GM12878 (cell line): ENCODE measurements at regions of chr15 and their contacts with region 1.

Region 1: GRCh38 chr15:91706322-91707032 is 147.0 kb upstream of the SLCO3A1 start:
- DNase-seq: peak; percentile 3
- ATAC-seq: peak; percentile 83
- H3K4me3 ChIP-seq: no peak overlapping the region
- H3K27ac ChIP-seq: no peak overlapping the region
- H3K4me1 ChIP-seq: no peaks in the 10 kb centered on the region
- H3K27me3 ChIP-seq: no peaks in the 10 kb centered on the region; a peak in 1 of 4 replicates
- CTCF ChIP-seq: peak; percentile 64 to 90 (median 70)
- EP300 ChIP-seq: no peak
- POLR2A ChIP-seq: no peak
- RAD21 ChIP-seq: peak; percentile 45

Region 2: GRCh38 chr15:91302588-91303439 is 403.7 kb before region 1 on chr15:
- CTCF ChIA-PET with region 1: interaction called, 5 read pairs
- POLR2A ChIA-PET with region 1: no interaction called
- RAD21 ChIA-PET with region 1: interaction called, 3 read pairs
- SMC1A ChIA-PET with region 1: interaction called, 3 read pairs
- in situ Hi-C with region 1: no loop called
- intact Hi-C with region 1: loop called (anchors 10 kb)
- DNase-seq: peak; percentile 17
- ATAC-seq: peak; percentile 78
- H3K4me3 ChIP-seq: no peak overlapping the region
- H3K27ac ChIP-seq: no peak overlapping the region
- H3K4me1 ChIP-seq: no peaks in the 10 kb centered on the region
- H3K27me3 ChIP-seq: peaks cover 0 to 3% of the 10 kb centered on the region in 2 experiments; a peak in 1 of 4 replicates
- CTCF ChIP-seq: peak; percentile 67 to 78 (median 70)
- EP300 ChIP-seq: no peak
- POLR2A ChIP-seq: no peak
- RAD21 ChIP-seq: peak; percentile 86

Region 3: DNA sequence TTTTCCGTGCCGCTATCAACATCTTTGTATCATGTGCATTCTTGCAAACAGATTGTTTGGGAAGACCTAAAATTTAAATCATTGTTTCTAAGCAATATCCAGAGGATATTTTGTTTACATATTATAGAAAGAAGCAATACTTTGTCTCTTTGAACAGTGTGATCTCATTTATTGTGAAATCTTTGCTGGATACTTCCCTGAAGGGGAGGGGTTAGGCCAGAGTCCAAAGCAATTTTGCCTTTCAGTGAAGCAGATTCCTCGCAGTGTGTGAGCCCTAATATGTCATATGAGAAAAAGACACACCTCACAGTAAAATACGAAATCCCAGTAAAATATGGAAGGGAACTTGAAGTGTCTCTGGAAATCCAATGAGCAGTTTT is 11.7 kb before region 1 on chr15:
- CTCF ChIA-PET with region 1: interaction called, 16 read pairs
- POLR2A ChIA-PET with region 1: no interaction called
- RAD21 ChIA-PET with region 1: no interaction called
- SMC1A ChIA-PET with region 1: no interaction called
- in situ Hi-C with region 1: no loop called
- intact Hi-C with region 1: no loop called
- DNase-seq: no peak
- ATAC-seq: no peak
- H3K4me3 ChIP-seq: no peak overlapping the region
- H3K27ac ChIP-seq: no peak overlapping the region
- H3K4me1 ChIP-seq: no peaks in the 10 kb centered on the region
- H3K27me3 ChIP-seq: no peaks in the 10 kb centered on the region
- CTCF ChIP-seq: no peak
- EP300 ChIP-seq: no peak
- POLR2A ChIP-seq: no peak
- RAD21 ChIP-seq: no peak

Region 4: DNA sequence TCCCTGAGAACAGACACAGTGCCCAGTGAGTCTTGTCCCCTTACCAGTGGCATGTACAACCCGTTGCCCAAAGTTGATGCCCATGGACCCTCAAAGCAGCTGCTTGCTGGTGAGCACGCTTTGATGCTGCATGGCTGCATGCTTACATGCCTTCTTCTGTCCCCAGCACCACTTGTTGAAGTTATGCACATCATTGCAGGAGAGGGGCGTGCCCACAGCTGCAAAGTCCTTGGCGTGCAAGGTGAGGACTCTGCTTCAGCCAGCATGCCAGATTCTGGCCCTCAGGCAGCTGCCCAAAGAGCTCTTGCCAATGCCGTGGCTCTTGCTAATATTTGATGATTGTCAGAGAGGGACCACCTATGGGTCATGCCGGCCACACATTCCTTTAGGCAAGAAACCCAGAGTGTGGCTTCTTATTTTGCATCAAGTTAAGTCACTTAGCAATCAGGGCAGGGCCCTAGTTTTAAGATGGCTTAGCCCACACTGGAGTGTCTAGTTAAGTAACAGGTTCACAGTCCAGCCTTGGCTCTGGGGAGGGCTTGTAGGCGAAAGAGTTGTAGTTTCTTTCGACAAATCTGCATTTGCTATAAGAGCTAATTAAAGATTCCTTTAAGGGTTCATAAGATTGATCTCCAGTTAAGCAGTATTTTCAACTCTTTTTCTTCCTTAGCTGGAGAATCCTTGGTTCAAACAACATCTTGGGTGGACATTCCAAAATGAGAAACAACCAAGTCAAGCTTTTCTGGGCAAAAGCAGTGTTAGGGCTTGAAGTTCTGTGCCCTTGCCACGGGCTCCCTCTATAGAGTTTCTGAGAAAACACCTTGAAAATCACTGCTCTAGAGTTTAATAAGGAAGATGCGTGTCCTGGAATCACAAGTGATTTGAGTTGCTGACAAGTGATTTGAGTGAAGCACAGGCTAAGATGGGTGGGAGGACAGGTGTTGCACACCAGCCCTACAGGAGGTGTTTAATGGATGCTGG is 275.6 kb after region 1 on chr15:
- CTCF ChIA-PET with region 1: interaction called, 10 read pairs
- POLR2A ChIA-PET with region 1: no interaction called
- RAD21 ChIA-PET with region 1: interaction called, 3 read pairs
- SMC1A ChIA-PET with region 1: no interaction called
- in situ Hi-C with region 1: no loop called
- intact Hi-C with region 1: no loop called
- DNase-seq: no peak
- ATAC-seq: peak; percentile 58
- H3K4me3 ChIP-seq: no peak overlapping the region
- H3K27ac ChIP-seq: no peak overlapping the region
- H3K4me1 ChIP-seq: no peaks in the 10 kb centered on the region
- H3K27me3 ChIP-seq: no peaks in the 10 kb centered on the region
- CTCF ChIP-seq: peak; percentile 3 to 35 (median 27); a peak in 3 of 6 replicates
- EP300 ChIP-seq: no peak
- POLR2A ChIP-seq: no peak
- RAD21 ChIP-seq: 0 out of 2 replicates have a peak, but pooled peaks have one; percentile 12